Prostate gland (tissue), 2 donors: ENCODE measurements at regions of chr5 and their contacts with region 1.

Region 1: DNA sequence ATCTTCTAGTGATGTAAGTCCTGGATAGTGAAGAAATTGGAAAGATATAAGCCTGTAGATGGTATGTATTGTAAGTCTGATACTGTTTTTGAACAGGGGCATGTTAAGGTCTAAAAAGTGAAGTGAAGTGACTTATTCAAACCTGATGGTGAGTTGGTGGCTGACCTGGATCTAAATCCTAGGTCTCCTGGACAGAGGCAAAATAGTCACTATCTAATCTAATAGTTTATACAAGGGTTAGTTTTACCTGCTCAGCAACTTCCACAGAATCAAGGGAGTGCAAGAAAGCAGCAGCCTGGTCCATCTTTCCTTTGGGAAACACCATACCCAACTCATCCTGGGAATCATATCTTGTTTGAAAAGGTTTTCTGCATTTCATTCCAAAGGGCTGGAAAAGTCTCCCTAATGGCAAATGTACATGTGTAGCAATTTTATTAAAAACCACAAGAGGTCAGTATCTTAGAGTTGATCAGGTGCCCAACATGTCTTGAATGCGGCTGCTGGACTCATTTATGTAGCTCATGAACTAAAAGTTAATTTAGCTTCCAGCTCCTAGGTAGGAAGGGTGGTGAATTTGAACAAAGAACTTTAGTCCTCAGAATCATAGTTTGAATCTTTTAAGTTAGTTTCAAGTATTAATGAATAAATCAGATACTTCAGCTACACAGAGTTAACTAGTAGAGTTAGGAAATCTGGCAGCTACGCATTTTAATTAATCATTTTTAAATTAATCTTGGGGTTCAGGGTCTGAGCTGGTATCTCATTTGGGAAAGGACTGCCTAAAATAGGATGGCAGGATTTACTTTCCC is 26.0 kb downstream of the SKP2 start:
- DNase-seq: no peak
- H3K4me3 ChIP-seq: no peak overlapping the region
- H3K27ac ChIP-seq: no peak overlapping the region
- H3K4me1 ChIP-seq: peaks cover 4% of the 10 kb centered on the region
- H3K27me3 ChIP-seq: no peaks in the 10 kb centered on the region
- CTCF ChIP-seq: peak in 3 of 4 experiments; percentile 53 to 58 (median 54)
- POLR2A ChIP-seq: no peak

Region 2: GRCh38 chr5:36397901-36398536 is 220.1 kb after region 1 on chr5:
- intact Hi-C with region 1: loop called (anchors 5 kb)
- DNase-seq: no peak
- H3K4me3 ChIP-seq: no peak overlapping the region
- H3K27ac ChIP-seq: peak overlapping the region in 1 of 2 donors; percentile 9
- H3K4me1 ChIP-seq: no peaks in the 10 kb centered on the region
- H3K27me3 ChIP-seq: no peaks in the 10 kb centered on the region
- CTCF ChIP-seq: peak in 3 of 4 experiments; percentile 25 to 57 (median 41)
- POLR2A ChIP-seq: no peak

Region 3: GRCh38 chr5:36422952-36423351 is 245.0 kb after region 1 on chr5:
- intact Hi-C with region 1: no loop called
- DNase-seq: no peak
- H3K4me3 ChIP-seq: no peak overlapping the region
- H3K27ac ChIP-seq: no peak overlapping the region
- H3K4me1 ChIP-seq: no peaks in the 10 kb centered on the region
- H3K27me3 ChIP-seq: no peaks in the 10 kb centered on the region
- CTCF ChIP-seq: no peak
- POLR2A ChIP-seq: no peak